ENCODE measurements at regions of chr3 and their contacts with region 1.

Region 1: GRCh38 chr3:194134757-194135528 is 1.0 kb upstream of the HES1 start:
- DNase-seq: peak; percentile 95 to 97
- ATAC-seq: peak; percentile 86
- H3K4me3 ChIP-seq: peak overlapping the region; percentile 4 to 49
- H3K27ac ChIP-seq: peak overlapping the region; percentile 54 to 82
- H3K4me1 ChIP-seq: peaks cover 0 to 9% of the 10 kb centered on the region in 2 donors
- H3K27me3 ChIP-seq: no peaks in the 10 kb centered on the region

Region 2: GRCh38 chr3:193744048-193744821 is 390.7 kb before region 1 on chr3:
- intact Hi-C with region 1: no loop called
- DNase-seq: no peak
- ATAC-seq: no peak
- H3K4me3 ChIP-seq: no peak overlapping the region
- H3K27ac ChIP-seq: no peak overlapping the region
- H3K4me1 ChIP-seq: no peaks in the 10 kb centered on the region
- H3K27me3 ChIP-seq: no peaks in the 10 kb centered on the region

Region 3: DNA sequence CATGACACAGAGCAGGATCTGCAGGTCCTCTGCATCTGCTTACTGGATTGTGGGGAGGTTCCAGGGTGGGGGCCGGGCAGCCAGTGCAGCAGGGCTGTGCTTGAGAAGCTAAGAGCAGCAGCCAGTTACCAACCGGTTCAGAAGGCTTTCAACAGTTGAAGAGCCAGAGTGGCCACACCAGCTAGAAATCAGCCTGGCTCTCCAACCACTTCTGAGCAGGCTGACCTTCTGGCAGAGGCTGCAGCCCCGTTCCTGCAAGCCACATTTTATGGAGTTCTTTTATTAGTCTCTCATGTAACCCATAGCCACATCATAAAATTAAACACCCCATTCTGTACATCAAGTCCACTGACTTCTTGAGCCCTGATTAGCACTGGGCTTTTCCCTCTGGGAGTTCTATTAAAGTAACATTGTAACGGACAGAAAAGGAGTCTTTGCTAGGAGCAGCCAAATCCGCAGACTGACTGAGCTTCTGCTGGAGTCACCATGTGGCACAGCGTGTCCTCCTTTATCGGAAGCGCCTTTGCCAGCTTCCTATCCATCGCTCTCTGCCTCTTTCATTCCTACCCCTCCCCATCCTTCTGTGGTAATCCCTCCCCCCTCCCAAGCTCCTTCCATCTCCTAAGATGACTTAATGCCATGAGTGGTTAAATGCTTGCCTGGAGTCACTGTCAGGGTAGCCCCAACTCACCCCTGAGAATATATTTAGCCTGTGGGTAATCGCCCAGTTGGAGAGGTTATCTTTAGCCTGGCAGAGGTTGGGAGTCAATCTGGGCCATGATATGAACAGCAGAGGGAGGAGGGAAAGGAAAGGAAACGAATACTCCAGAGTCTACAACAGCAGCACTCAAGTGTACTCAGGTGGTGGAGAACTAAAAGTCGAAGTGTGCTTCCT is 137.5 kb before region 1 on chr3:
- intact Hi-C with region 1: loop called (anchors 2 kb)
- DNase-seq: no peak
- ATAC-seq: peak; percentile 8
- H3K4me3 ChIP-seq: no peak overlapping the region
- H3K27ac ChIP-seq: no peak overlapping the region
- H3K4me1 ChIP-seq: peaks cover 1 to 3% of the 10 kb centered on the region in 2 donors
- H3K27me3 ChIP-seq: no peaks in the 10 kb centered on the region

Region 4: DNA sequence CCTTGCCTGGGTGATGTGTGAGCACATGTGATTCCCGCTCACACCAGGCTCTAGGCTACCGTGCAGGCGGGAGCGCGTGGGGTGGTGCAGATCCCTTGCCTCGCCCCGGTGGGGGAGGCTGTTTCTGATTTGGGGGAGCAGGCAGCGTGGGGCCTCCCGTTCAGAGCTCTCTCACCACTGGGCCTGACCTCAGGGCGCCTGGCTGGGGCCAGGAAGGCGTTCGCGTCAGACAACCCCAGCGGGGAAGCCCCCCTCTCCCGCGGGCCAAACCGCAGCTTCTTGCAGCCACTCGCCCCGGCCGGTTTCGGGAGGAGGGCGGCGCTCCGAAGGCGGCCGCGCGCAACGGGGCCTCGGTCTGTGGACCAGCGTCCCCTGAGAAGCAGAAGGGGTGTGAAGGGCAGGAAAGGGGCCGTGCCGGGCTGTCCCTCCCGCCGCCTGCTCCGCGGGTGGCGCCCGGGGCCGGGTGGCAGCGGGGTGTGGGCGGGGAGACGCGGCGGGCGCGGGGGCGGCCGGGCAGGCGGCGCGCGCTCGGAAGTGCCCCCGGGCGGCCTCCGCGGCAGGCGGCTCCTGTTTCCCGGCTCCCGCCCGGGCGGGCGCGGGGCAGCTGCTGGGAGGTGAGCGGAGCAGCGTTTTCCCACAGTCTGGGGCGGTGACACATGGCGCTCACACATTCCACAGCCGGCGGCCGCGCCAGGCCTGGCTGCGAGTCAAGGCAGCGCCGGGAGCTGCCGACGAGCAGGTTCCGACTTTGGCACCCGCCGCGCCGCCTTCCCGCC is 64.1 kb before region 1 on chr3:
- intact Hi-C with region 1: loop called (anchors 1 to 2 kb)
- DNase-seq: peak; percentile 91 to 96
- ATAC-seq: peak; percentile 90
- H3K4me3 ChIP-seq: peak overlapping the region in 1 of 2 donors; percentile 27
- H3K27ac ChIP-seq: peak overlapping the region in 1 of 2 donors; percentile 22
- H3K4me1 ChIP-seq: no peaks in the 10 kb centered on the region
- H3K27me3 ChIP-seq: no peaks in the 10 kb centered on the region

Region 5: GRCh38 chr3:194277104-194277785 is 142.3 kb after region 1 on chr3:
- intact Hi-C with region 1: loop called (anchors 5 kb)
- DNase-seq: peak; percentile 83 to 90
- ATAC-seq: peak; percentile 82
- H3K4me3 ChIP-seq: no peak overlapping the region
- H3K27ac ChIP-seq: peak overlapping the region; percentile 12 to 95
- H3K4me1 ChIP-seq: peaks cover 4 to 6% of the 10 kb centered on the region in 2 donors
- H3K27me3 ChIP-seq: no peaks in the 10 kb centered on the region

Region 6: GRCh38 chr3:194315088-194315964 is 180.4 kb after region 1 on chr3:
- intact Hi-C with region 1: loop called (anchors 2 to 5 kb)
- DNase-seq: peak; percentile 87 to 97
- ATAC-seq: peak; percentile 90
- H3K4me3 ChIP-seq: peak overlapping the region in 1 of 2 donors; percentile 7
- H3K27ac ChIP-seq: no peak overlapping the region
- H3K4me1 ChIP-seq: no peaks in the 10 kb centered on the region
- H3K27me3 ChIP-seq: no peaks in the 10 kb centered on the region